ENCODE measurements at regions of chr5 and their contacts with region 1.

Region 1: DNA sequence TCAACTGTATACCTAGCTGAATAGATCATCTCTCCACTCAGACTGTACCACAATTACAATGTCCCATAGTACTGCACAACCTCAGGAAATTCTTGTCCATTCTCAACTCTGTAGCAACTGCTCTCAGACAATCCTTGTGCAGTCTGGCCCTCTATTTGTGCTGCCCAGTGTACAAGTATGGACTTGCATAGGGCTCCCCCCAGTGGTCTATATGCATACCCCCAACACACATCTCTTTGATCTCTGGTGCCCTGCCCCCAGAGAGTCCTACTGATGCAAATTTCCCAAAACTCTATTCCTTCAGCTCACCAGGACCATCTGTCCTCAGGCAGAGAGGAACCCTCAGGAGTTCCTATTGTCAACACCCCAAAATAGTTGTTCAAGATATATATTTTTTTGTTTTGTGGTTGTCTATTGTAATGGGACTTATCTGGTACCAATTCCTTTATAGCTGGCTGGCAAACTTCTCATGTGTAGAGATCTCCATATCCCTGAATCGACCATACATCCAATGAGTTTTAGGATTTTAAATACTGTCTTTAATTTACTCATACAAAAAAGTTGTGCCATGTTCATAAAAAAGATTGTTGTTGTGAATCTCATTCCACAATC is 205.2 kb downstream of the SLCO4C1 start:
- DNase-seq: peak; percentile 68 to 74
- H3K4me3 ChIP-seq: no peak overlapping the region
- H3K4me3 Mint-ChIP-seq: no peak overlapping the region
- H3K27ac Mint-ChIP-seq: no peak overlapping the region
- H3K4me1 ChIP-seq: no peaks in the 10 kb centered on the region; the same call in 1 of the 2 replicates
- H3K4me1 Mint-ChIP-seq: peaks cover 13% of the 10 kb centered on the region
- H3K27me3 ChIP-seq: no peaks in the 10 kb centered on the region
- H3K27me3 Mint-ChIP-seq: no peaks in the 10 kb centered on the region
- CTCF ChIP-seq: peak; percentile 71 to 83

Region 2: GRCh38 chr5:101728933-101729332 is 361.9 kb before region 1 on chr5:
- CTCF ChIA-PET with region 1: no interaction called
- POLR2A ChIA-PET with region 1: no interaction called
- intact Hi-C with region 1: loop called (anchors 10 kb)
- DNase-seq: peak in 1 of 2 experiments; percentile 13
- H3K4me3 ChIP-seq: no peak overlapping the region
- H3K4me3 Mint-ChIP-seq: no peak overlapping the region
- H3K27ac Mint-ChIP-seq: no peak overlapping the region
- H3K4me1 ChIP-seq: no peaks in the 10 kb centered on the region
- H3K4me1 Mint-ChIP-seq: no peaks in the 10 kb centered on the region
- H3K27me3 ChIP-seq: no peaks in the 10 kb centered on the region
- H3K27me3 Mint-ChIP-seq: no peaks in the 10 kb centered on the region
- CTCF ChIP-seq: peak; percentile 15 to 28

Region 3: DNA sequence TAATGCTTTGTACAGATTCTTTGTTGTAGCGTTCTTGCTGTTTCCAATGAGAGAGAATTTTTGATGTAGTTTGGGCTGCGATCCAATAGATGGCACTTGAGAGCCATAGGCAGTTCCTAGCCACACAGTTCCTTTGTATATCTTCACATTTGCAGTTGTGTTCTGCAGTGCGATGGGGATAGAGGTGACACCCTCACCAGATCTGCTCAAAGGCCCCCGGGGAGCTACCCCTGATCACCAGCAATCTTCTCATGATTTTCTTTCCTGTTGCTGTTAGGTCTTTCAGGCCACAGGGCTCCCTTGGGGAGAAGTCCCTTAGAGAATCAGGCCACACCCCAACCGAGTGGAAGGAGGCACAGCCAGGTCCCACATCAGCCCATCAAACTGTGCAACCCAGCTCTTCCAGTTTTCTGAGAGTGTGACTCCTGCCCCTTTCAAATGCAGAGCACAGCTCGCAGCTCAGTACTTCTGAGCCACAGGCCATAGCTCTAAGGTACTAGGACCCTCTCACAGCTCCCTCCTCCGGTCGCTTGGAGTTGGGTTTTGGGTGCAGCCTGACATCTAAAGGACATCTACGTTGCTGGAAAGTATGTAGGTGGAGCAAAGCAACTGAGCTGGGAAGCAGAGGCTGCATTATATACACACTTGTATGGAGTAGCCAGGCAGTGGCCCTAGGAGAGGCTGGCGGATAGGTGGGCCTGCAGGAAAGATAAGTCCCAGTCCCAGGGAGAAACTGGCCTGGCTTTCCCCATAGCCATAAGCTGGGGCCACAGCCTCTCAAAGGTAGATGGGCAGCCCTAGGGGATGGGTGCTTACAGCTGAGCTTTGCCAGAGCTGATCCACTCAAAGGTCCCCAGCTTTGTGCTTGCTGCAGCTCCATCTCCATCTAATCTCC is 148.3 kb before region 1 on chr5:
- CTCF ChIA-PET with region 1: no interaction called
- POLR2A ChIA-PET with region 1: no interaction called
- intact Hi-C with region 1: loop called (anchors 1 kb)
- DNase-seq: peak; percentile 39 to 59
- H3K4me3 ChIP-seq: no peak overlapping the region
- H3K4me3 Mint-ChIP-seq: no peak overlapping the region
- H3K27ac Mint-ChIP-seq: no peak overlapping the region
- H3K4me1 ChIP-seq: no peaks in the 10 kb centered on the region
- H3K4me1 Mint-ChIP-seq: no peaks in the 10 kb centered on the region
- H3K27me3 ChIP-seq: no peaks in the 10 kb centered on the region; the same call in 1 of the 2 replicates
- H3K27me3 Mint-ChIP-seq: peaks cover 3% of the 10 kb centered on the region
- CTCF ChIP-seq: peak; percentile 69 to 93

Region 4: DNA sequence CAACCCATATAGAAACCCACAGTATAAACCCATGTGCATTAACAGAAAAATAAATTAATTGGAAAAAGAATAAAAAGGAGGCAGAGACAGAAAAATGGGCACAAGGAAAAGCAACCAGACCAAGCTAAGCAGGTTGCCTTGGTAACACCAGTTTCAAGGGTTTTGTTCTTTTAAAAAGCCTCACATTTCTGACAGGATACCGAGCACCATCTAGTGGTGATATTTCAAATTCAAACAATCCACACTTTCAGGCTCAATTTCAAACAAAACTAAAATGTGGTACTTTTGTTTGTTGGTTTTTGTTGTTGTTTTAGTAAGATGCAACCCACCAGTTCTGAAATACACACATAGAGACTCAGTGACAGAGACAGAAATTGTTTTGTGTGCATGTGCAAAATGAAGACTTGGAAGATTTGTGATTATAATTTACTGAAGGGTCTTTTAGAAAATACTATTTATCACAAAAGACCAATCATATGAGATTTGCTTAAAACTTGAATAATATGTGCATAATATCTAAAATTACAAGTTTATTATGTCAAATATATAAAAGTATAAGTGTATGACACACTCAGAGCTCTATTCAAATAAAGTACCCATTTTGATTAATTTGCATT is 113.0 kb before region 1 on chr5:
- CTCF ChIA-PET with region 1: no interaction called
- POLR2A ChIA-PET with region 1: no interaction called
- intact Hi-C with region 1: loop called (anchors 1 kb)
- DNase-seq: peak in 1 of 2 experiments; percentile 52
- H3K4me3 ChIP-seq: no peak overlapping the region
- H3K4me3 Mint-ChIP-seq: no peak overlapping the region
- H3K27ac Mint-ChIP-seq: no peak overlapping the region
- H3K4me1 ChIP-seq: no peaks in the 10 kb centered on the region
- H3K4me1 Mint-ChIP-seq: no peaks in the 10 kb centered on the region
- H3K27me3 ChIP-seq: no peaks in the 10 kb centered on the region
- H3K27me3 Mint-ChIP-seq: peaks cover 3% of the 10 kb centered on the region
- CTCF ChIP-seq: peak; percentile 66 to 70

Region 5: DNA sequence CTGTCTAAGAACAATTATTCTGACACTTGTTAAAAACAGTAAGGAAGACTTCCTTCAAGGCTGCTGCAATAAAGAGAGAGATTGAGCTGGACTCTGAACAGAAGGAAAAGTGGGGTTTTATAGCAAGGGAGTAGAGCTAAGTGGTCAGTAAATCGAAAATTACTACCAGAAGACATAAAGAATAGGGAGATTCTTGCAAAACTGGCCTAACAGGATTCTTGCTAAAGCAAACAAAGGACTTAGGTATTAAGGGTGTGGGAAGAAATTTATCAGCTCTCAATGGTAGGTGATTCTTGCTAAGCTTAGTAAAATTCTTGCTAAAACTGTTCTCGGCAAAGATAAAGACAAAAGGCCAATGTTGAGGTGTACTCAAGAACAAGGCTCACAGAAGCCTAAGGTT is 95.3 kb before region 1 on chr5:
- CTCF ChIA-PET with region 1: interaction called, 3 read pairs
- POLR2A ChIA-PET with region 1: no interaction called
- intact Hi-C with region 1: loop called (anchors 1 kb)
- DNase-seq: peak in 1 of 2 experiments; percentile 79
- H3K4me3 ChIP-seq: no peak overlapping the region
- H3K4me3 Mint-ChIP-seq: peak overlapping the region; percentile 4
- H3K27ac Mint-ChIP-seq: peak overlapping the region; percentile 15
- H3K4me1 ChIP-seq: peaks cover 33% of the 10 kb centered on the region
- H3K4me1 Mint-ChIP-seq: peaks cover 37% of the 10 kb centered on the region
- H3K27me3 ChIP-seq: no peaks in the 10 kb centered on the region
- H3K27me3 Mint-ChIP-seq: no peaks in the 10 kb centered on the region
- CTCF ChIP-seq: no peak